A673 (cell line): ENCODE measurements at regions of chr11 and their contacts with region 1.

Region 1: GRCh38 chr11:36478700-36479329 is 31.3 kb downstream of the TRAF6 start:
- DNase-seq: peak; percentile 93
- H3K4me3 ChIP-seq: no peak overlapping the region
- H3K27ac ChIP-seq: no peak overlapping the region
- H3K4me1 ChIP-seq: peaks cover 14% of the 10 kb centered on the region
- H3K27me3 ChIP-seq: no peaks in the 10 kb centered on the region
- CTCF ChIP-seq: peak; percentile 98

Region 2: GRCh38 chr11:36041988-36042611 is 436.7 kb before region 1 on chr11:
- CTCF ChIA-PET with region 1: interaction called, 3 read pairs
- POLR2A ChIA-PET with region 1: no interaction called
- intact Hi-C with region 1: loop called (anchors 2 kb)
- DNase-seq: peak; percentile 47
- H3K4me3 ChIP-seq: no peak overlapping the region
- H3K27ac ChIP-seq: no peak overlapping the region
- H3K4me1 ChIP-seq: no peaks in the 10 kb centered on the region
- H3K27me3 ChIP-seq: no peaks in the 10 kb centered on the region
- CTCF ChIP-seq: peak; percentile 87

Region 3: DNA sequence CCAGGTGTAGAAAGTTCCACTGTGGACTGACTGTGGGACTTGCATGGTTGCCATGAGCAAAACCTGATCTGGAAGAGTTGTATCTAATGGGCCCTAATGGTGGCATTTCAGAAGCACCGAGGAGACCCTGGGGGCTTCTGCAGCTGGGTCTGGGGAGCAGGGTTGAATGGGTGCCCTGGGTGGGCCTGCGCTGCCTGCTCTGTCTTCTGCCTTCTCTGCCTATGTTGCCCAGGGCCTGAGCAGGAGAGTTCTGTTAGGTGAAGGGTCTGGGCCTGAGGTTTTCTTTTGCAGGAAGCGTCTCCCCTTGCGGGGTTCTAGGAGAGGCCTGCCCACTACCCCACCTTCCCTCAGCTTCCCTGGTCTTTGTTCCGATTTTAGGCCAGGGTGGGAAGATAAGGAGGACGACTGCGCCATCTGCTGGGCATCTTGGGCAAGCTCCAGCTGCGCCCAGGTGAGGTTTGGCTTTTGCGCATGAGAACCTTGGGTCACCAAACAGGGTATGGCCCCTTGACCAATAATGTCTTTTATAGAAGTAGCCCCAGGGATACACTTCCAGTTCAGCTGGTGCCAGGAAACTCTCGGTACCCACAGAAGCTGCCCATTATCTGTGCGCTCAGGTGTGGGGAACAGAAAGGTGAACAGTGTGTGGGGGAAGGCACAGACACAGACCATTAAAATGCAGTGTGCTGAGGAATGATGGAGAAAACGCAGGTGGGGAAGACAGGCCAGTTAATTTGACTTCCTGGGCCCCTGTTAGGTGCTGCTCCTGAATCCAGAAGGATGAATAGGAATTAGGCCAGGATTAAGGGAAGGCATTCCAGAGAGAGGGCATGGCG is 212.8 kb before region 1 on chr11:
- CTCF ChIA-PET with region 1: interaction called, 24 read pairs
- POLR2A ChIA-PET with region 1: no interaction called
- intact Hi-C with region 1: no loop called
- DNase-seq: peak; percentile 87
- H3K4me3 ChIP-seq: no peak overlapping the region
- H3K27ac ChIP-seq: no peak overlapping the region
- H3K4me1 ChIP-seq: no peaks in the 10 kb centered on the region
- H3K27me3 ChIP-seq: peaks cover 2% of the 10 kb centered on the region
- CTCF ChIP-seq: peak; percentile 100

Region 4: GRCh38 chr11:36289226-36289852 is 189.5 kb before region 1 on chr11 and contains the start of gene COMMD9:
- CTCF ChIA-PET with region 1: interaction called, 49 read pairs
- POLR2A ChIA-PET with region 1: interaction called, 3 read pairs
- intact Hi-C with region 1: loop called (anchors 2 kb)
- DNase-seq: peak; percentile 100
- H3K4me3 ChIP-seq: peak within 1 kb of the TSS; percentile 61
- H3K27ac ChIP-seq: peak within 1 kb of the TSS; percentile 39
- H3K4me1 ChIP-seq: peaks cover 17% of the 10 kb centered on the region
- H3K27me3 ChIP-seq: no peaks in the 10 kb centered on the region
- CTCF ChIP-seq: no peak
- total RNA-seq, gene COMMD9: 147 and 154 TPM in 2 replicates

Region 5: DNA sequence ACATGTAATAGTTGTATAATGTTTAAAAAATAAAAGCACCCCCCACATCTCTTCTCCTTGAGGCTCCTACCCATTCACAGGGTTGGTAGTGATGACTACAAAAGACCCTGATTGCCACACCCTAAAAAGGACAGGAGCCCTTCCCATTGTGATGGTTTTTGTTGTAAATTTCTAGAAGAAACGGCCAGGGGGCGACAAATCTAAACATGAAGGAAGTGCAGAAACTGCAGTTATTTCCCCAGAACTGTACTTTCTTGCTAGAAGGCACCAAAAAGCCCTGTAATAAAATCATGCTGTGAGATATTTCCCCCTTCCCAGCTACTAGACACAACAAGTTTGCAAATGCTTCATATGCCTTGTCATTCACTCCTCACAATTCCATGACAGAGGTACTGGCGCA is 171.9 kb before region 1 on chr11:
- CTCF ChIA-PET with region 1: interaction called, 12 read pairs
- POLR2A ChIA-PET with region 1: no interaction called
- intact Hi-C with region 1: loop called (anchors 1 kb)
- DNase-seq: peak; percentile 91
- H3K4me3 ChIP-seq: no peak overlapping the region
- H3K27ac ChIP-seq: no peak overlapping the region
- H3K4me1 ChIP-seq: peaks cover 4% of the 10 kb centered on the region
- H3K27me3 ChIP-seq: no peaks in the 10 kb centered on the region
- CTCF ChIP-seq: peak; percentile 91

Region 6: GRCh38 chr11:36376888-36377758 is 101.7 kb before region 1 on chr11:
- CTCF ChIA-PET with region 1: interaction called, 5 read pairs
- POLR2A ChIA-PET with region 1: no interaction called
- intact Hi-C with region 1: loop called (anchors 5 kb)
- DNase-seq: peak; percentile 91
- H3K4me3 ChIP-seq: peak overlapping the region; percentile 57
- H3K27ac ChIP-seq: peak overlapping the region; percentile 47
- H3K4me1 ChIP-seq: peaks cover 72% of the 10 kb centered on the region
- H3K27me3 ChIP-seq: no peaks in the 10 kb centered on the region
- CTCF ChIP-seq: peak; percentile 99

Region 7: DNA sequence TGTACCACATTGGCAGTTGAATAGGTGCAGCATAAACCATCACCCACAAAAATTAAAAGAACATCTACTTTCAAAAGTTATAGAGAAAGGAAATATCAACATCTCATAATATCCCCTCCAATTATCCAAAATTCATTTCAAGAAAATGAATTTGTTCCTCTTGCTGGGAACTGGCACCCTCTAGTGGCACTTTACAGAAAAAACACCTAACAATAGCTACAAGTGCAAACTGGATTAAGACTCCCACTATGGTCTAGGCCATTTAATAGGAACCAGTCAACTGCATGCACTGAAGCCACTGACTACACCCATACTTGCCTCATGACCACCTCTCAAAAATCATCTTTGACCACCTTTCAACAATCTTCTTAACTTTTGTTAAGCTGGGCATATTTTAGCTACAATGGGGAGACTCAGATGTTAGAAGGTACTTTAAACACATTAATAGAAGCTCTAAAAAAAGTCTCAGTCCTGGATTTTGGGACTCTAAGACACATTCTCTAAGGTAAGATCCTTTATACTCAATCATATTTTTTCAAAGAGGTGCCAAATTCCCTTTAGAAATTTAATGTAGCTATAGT is 14.0 kb after region 1 on chr11:
- CTCF ChIA-PET with region 1: interaction called, 14 read pairs
- POLR2A ChIA-PET with region 1: no interaction called
- intact Hi-C with region 1: no loop called
- DNase-seq: peak; percentile 86
- H3K4me3 ChIP-seq: no peak overlapping the region
- H3K27ac ChIP-seq: no peak overlapping the region
- H3K4me1 ChIP-seq: peaks cover 11% of the 10 kb centered on the region
- H3K27me3 ChIP-seq: no peaks in the 10 kb centered on the region
- CTCF ChIP-seq: peak; percentile 100

Region 8: DNA sequence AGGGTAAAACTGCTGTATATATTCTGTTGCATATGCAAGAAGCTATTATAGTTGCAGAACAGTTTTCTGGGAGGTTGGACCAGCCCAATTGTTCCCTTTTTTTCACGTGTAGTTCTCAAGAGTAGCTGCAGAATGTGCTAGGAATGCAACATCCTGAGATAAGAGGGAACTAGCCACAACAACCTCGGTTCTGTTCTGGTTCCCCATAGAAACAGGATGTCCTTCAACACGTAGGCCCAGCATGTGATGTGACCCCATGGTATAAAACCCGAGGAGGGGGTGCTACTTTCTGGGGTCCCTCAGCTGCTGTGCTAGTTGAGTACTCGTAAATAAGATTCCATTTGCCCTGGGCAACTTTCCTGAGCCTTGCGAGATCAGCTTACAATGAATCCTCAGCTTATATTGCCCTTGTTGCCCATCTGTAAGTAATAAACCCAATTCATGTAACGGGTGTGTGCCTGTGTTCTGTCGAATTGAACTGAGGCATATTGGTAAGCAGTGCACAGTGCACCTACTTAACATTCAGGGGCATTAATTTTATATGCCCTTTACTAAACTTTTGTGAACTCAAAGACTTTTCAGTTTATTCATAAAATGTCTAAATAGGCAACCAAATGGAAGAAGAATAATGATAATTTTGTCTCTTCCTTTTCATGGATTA is 54.3 kb after region 1 on chr11:
- CTCF ChIA-PET with region 1: no interaction called
- POLR2A ChIA-PET with region 1: no interaction called
- intact Hi-C with region 1: no loop called
- DNase-seq: no peak
- H3K4me3 ChIP-seq: no peak overlapping the region
- H3K27ac ChIP-seq: no peak overlapping the region
- H3K4me1 ChIP-seq: peaks cover 3% of the 10 kb centered on the region
- H3K27me3 ChIP-seq: no peaks in the 10 kb centered on the region
- CTCF ChIP-seq: no peak

Region 9: DNA sequence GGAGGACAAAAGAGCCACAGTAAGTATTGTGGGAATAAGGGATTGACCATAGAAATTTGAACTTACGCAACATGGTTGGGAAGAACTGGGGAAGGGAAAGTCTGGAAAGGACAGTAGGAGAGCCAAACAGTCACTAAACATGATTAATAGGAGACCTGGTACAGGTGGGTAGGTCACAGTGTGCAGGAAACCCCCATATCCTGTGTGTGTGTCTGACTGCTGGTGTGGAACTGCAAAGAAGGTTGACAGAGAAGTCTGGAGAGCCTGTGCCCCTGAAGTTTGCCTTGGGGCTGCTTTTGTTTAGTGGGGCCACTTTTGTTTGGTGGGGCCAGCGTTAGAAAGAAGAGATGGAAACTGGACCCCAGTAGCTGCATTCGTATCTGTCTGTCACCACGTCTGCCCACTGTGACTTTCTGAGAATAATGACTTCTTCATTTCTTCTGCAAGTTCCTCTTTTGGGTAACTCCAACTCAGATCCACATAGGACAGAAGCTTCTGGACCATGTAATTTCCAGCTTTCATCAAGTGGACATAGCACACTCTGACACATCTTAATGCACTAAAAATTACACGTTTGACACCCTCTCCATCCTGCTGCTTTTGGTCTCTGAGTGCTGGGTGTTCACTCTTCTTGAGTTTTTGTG is 246.0 kb after region 1 on chr11:
- CTCF ChIA-PET with region 1: no interaction called
- POLR2A ChIA-PET with region 1: no interaction called
- intact Hi-C with region 1: no loop called
- DNase-seq: no peak
- H3K4me3 ChIP-seq: no peak overlapping the region
- H3K27ac ChIP-seq: no peak overlapping the region
- H3K4me1 ChIP-seq: no peaks in the 10 kb centered on the region
- H3K27me3 ChIP-seq: peaks cover 54% of the 10 kb centered on the region
- CTCF ChIP-seq: no peak